Naive thymus-derived CD4-positive, alpha-beta T cell (primary cell): ENCODE measurements at regions of chr13 and their contacts with region 1.

Region 1: GRCh38 chr13:48184260-48184659 is 48.7 kb upstream of the ITM2B start:
- DNase-seq: no peak
- ATAC-seq: no peak
- H3K4me3 ChIP-seq: no peak overlapping the region
- H3K4me3 Mint-ChIP-seq: peak overlapping the region in 9 of 10 donors; percentile 41 to 79 (median 65)
- H3K27ac ChIP-seq: peak overlapping the region; percentile 42
- H3K27ac Mint-ChIP-seq: peak overlapping the region in 8 of 9 donors; percentile 82 to 97 (median 90)
- H3K4me1 ChIP-seq: peaks cover 8 to 58% of the 10 kb centered on the region in 2 donors
- H3K4me1 Mint-ChIP-seq: peaks cover 40 to 81% (median 64%) of the 10 kb centered on the region in 7 donors
- H3K27me3 ChIP-seq: no peaks in the 10 kb centered on the region
- H3K27me3 Mint-ChIP-seq: peaks cover 0 to 10% (median 0%) of the 10 kb centered on the region in 5 donors

Region 2: GRCh38 chr13:48167866-48168265 is 16.4 kb before region 1 on chr13:
- CTCF ChIA-PET with region 1: interaction called, 9 read pairs
- POLR2A ChIA-PET with region 1: interaction called, 12 read pairs
- intact Hi-C with region 1: no loop called
- DNase-seq: no peak
- ATAC-seq: no peak
- H3K4me3 ChIP-seq: no peak overlapping the region
- H3K4me3 Mint-ChIP-seq: no peak overlapping the region
- H3K27ac ChIP-seq: no peak overlapping the region
- H3K27ac Mint-ChIP-seq: no peak overlapping the region
- H3K4me1 ChIP-seq: no peaks in the 10 kb centered on the region
- H3K4me1 Mint-ChIP-seq: peaks cover 0 to 15% (median 6%) of the 10 kb centered on the region in 7 donors
- H3K27me3 ChIP-seq: no peaks in the 10 kb centered on the region
- H3K27me3 Mint-ChIP-seq: peaks cover 0 to 27% (median 0%) of the 10 kb centered on the region in 5 donors

Region 3: GRCh38 chr13:48194379-48194754 is 10.1 kb after region 1 on chr13:
- CTCF ChIA-PET with region 1: interaction called, 6 read pairs
- POLR2A ChIA-PET with region 1: interaction called, 22 read pairs
- intact Hi-C with region 1: loop called in 1 of 2 experiments (anchors 1 kb)
- DNase-seq: peak in 1 of 9 donors; percentile 20
- ATAC-seq: peak; percentile 86
- H3K4me3 ChIP-seq: no peak overlapping the region
- H3K4me3 Mint-ChIP-seq: peak overlapping the region in 9 of 10 donors; percentile 6 to 82 (median 56)
- H3K27ac ChIP-seq: no peak overlapping the region
- H3K27ac Mint-ChIP-seq: peak overlapping the region in 7 of 9 donors; percentile 14 to 86 (median 48)
- H3K4me1 ChIP-seq: peaks cover 4 to 12% of the 10 kb centered on the region in 2 donors
- H3K4me1 Mint-ChIP-seq: peaks cover 16 to 67% (median 44%) of the 10 kb centered on the region in 7 donors
- H3K27me3 ChIP-seq: no peaks in the 10 kb centered on the region
- H3K27me3 Mint-ChIP-seq: peaks cover 0 to 14% (median 0%) of the 10 kb centered on the region in 5 donors

Region 4: GRCh38 chr13:48199499-48199898 is 15.2 kb after region 1 on chr13:
- CTCF ChIA-PET with region 1: interaction called, 6 read pairs
- POLR2A ChIA-PET with region 1: interaction called, 22 read pairs
- intact Hi-C with region 1: loop called in 1 of 2 experiments (anchors 1 kb)
- DNase-seq: no peak
- ATAC-seq: no peak
- H3K4me3 ChIP-seq: no peak overlapping the region
- H3K4me3 Mint-ChIP-seq: peak overlapping the region in 6 of 10 donors; percentile 1 to 44 (median 10)
- H3K27ac ChIP-seq: no peak overlapping the region
- H3K27ac Mint-ChIP-seq: peak overlapping the region in 8 of 9 donors; percentile 46 to 82 (median 69)
- H3K4me1 ChIP-seq: peaks cover under 1 to 10% of the 10 kb centered on the region in 2 donors
- H3K4me1 Mint-ChIP-seq: peaks cover 5 to 36% (median 28%) of the 10 kb centered on the region in 7 donors
- H3K27me3 ChIP-seq: no peaks in the 10 kb centered on the region
- H3K27me3 Mint-ChIP-seq: peaks cover 0 to 35% (median 0%) of the 10 kb centered on the region in 5 donors